ENCODE measurements at regions of chr10 and their contacts with region 1.

Region 1: DNA sequence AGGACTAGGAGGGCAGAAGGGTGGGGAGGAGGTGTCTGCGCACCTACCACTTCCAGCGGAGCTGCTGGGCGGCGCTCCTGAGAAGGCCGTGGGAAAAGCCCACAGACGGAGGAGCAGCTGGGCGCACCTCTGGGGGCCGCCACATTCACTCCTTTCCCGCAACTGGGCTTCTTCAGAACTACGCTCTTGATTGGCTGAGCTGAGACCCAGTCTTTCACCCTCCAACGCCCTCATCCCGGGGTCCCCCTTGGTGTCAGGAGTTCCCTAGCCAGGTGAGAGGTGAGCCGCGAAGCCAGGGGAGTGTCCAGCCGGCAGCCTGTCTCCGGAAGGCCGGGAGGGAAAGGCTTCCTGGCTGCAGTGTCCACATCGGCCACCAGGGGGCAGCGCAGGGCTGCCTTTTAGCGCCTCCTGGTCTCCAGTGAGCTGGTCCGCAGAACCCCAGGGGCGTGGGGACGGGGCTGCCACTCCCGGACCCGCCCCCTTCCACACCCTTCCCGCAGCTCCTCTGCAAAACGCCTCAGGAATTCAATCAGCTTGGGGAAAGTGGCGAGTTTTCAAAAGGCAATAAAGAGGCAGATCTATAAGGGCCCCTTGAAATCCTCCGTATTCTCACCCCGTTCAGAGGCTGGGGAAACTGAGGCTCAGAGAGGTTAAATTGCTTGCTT is 98.8 kb downstream of the CHST15 start:
- DNase-seq: peak; percentile 66 to 97 (median 90)

Region 2: DNA sequence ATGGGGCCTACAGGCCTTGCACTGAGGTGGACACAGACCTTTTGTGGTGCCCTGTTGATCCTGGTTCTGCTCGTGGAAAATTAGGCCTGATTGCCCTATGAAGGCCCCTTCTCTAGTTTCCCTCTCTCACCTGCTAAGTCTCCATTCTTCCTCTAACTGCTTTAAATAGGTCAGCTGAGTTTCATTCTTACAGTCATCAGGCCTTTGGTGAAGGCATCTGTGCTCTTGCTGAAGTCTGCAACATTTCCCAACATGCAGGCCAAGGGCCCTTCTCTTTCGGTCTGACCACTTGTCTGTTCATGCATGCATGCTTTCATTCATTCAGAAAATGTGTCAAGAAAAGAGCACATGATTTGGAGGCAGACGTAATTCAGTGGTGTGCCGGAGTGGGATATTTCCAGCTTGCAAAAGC is 596.4 kb before region 1 on chr10:
- intact Hi-C with region 1: no loop called
- DNase-seq: no peak

Region 3: DNA sequence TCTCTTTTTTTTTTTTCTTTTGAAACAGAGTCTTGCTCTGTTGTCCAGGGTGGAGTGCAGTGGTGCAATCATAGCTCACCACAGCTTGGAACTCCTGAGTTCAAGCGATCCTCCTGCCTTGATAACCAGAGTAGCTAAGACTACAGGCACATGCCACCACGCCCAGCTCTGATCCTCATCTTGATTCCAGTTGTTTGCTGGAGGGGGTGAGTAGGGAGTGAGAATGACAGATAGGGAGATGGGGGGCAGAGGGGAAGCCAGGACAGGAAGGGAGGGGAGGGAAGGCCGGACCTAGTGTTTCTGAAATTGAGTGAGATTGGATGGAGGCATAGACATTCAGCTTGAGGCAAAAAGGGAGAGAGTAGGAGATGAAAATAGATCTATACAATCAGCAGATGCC is 77.8 kb before region 1 on chr10:
- intact Hi-C with region 1: no loop called
- DNase-seq: no peak

Region 4: DNA sequence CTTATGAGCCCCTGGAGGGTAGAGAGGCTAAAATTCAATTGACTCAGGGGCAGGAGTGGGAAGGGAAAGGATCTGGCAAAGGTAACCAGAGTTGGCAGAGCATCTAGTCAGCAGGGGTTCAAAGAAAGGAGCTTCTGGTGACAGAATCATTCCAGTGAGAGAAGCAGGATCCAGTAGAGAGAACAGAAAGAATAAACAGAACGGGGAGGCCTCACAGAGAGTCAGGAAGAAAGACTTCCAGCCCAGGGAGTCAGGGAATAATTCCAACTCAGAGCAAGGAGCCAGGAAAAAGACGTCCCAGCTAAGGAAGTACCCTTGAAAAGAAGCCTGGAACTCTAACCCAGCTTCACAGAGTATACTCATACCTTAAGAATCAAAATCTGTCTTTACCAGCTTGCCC is 36.3 kb before region 1 on chr10:
- intact Hi-C with region 1: no loop called
- DNase-seq: no peak

Region 5: GRCh38 chr10:124092860-124093773 is 98.6 kb after region 1 on chr10 and contains the start of gene CHST15:
- intact Hi-C with region 1: loop called (anchors 5 kb)
- DNase-seq: peak in 6 of 10 donors; percentile 31 to 90 (median 67)

Region 6: GRCh38 chr10:124125447-124126116 is 131.0 kb after region 1 on chr10:
- intact Hi-C with region 1: no loop called
- DNase-seq: peak in 1 of 10 donors; percentile 59

Region 7: GRCh38 chr10:124388823-124389612 is 394.5 kb after region 1 on chr10:
- intact Hi-C with region 1: loop called (anchors 1 kb)
- DNase-seq: peak; percentile 78 to 98 (median 87)